PC-9 (cell line): ENCODE measurements at regions of chr12 and their contacts with region 1.

Region 1: DNA sequence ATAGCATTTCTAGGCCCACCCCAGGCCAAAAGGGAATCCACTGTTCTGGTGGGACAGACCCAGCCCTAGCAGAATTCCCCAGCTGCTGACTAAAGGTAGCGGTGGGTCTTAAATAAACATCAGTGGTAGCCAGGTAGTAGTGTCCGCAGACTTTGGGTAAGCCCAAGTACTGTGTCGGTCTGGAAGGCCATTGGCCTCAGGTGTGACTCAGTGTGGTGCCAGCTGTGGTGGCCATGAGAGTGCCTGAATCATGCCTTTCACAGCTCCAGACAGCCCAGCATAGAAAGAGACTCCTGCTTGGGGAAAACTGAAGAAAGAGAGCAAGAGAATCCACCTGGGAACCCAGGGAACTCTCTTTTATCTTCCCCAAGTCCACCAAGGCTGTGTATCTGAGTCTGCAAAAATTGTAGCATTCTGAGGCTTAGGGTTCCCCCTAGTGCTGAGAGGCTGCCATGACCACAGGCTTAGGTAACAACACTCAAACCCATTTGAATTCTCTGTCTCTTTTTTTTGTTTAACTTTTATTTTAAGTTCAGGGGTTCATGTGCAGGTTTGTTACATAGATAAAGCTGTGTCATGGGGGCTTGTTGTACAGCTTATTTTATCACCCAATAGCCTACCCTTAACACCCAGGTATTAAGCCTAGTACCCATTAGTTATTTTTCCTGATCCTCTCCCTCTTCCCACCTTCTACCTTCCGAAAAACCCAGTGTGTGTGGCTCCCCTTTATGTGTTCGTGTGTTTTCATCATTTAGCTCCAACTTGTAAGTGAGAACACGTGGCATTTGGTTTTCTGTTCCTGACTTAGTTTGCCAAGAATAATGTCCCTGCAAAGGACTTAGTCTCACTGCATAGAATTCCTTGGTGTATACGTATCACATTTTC is 16.7 kb upstream of the CD163L1 start:
- DNase-seq: peak; percentile 56 to 74
- H3K4me3 ChIP-seq: no peak overlapping the region
- H3K27ac ChIP-seq: no peak overlapping the region
- H3K4me1 ChIP-seq: no peaks in the 10 kb centered on the region
- H3K27me3 ChIP-seq: no peaks in the 10 kb centered on the region
- CTCF ChIP-seq: peak; percentile 95

Region 2: DNA sequence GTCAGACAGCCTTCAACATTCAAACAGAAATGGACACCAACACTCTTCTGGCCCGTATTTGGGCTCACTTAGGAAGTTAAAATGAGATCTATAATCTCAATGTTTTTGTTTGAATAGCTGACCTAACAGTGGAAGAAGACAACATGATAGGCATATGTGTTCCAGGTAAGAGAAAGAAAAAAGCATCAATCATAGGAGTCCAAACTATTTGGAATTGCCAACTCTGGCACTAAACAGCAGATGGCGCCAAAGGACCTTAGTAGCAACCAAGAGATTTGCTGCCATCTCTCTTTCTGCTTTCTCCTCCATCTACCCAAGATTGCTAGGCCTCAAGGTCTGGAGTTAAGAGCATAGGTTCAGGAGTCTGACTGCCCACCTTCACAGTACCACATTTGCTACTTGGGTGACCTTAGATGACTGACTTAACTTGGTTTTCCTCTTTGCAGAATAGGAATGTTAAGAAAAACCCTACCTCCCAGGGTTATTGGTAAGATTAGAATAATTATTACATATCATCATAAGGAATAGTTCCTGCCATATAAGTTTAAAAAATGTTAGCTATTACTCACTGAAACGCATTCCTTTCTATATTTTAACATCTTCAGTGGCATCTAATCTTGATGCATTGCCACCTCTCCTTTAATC is 240.9 kb before region 1 on chr12:
- CTCF ChIA-PET with region 1: no interaction called
- POLR2A ChIA-PET with region 1: no interaction called
- intact Hi-C with region 1: loop called (anchors 1 kb)
- DNase-seq: peak; percentile 60 to 69
- H3K4me3 ChIP-seq: no peak overlapping the region
- H3K27ac ChIP-seq: no peak overlapping the region
- H3K4me1 ChIP-seq: no peaks in the 10 kb centered on the region
- H3K27me3 ChIP-seq: no peaks in the 10 kb centered on the region
- CTCF ChIP-seq: peak; percentile 96

Region 3: DNA sequence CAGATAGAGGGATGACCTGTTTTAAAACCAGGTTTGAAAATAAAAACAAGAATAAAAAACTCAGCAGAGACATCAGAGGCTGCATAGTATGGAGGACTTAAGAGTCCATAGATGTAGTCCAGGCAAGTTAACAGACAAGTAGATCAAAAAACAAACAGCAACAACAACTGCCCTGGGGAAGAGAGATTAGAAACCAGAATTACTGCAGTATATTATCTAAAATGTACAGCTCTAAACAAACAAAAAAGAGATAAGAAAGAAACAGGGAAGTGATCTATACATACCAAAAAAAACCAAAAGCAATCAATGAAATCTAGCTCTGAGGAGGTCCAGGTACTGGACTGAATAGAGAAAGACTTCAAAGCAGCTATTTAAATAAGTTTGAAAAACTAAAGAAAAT is 108.0 kb before region 1 on chr12:
- CTCF ChIA-PET with region 1: interaction called, 13 read pairs
- POLR2A ChIA-PET with region 1: no interaction called
- intact Hi-C with region 1: no loop called
- DNase-seq: no peak
- H3K4me3 ChIP-seq: no peak overlapping the region
- H3K27ac ChIP-seq: no peak overlapping the region
- H3K4me1 ChIP-seq: no peaks in the 10 kb centered on the region
- H3K27me3 ChIP-seq: no peaks in the 10 kb centered on the region
- CTCF ChIP-seq: no peak

Region 4: DNA sequence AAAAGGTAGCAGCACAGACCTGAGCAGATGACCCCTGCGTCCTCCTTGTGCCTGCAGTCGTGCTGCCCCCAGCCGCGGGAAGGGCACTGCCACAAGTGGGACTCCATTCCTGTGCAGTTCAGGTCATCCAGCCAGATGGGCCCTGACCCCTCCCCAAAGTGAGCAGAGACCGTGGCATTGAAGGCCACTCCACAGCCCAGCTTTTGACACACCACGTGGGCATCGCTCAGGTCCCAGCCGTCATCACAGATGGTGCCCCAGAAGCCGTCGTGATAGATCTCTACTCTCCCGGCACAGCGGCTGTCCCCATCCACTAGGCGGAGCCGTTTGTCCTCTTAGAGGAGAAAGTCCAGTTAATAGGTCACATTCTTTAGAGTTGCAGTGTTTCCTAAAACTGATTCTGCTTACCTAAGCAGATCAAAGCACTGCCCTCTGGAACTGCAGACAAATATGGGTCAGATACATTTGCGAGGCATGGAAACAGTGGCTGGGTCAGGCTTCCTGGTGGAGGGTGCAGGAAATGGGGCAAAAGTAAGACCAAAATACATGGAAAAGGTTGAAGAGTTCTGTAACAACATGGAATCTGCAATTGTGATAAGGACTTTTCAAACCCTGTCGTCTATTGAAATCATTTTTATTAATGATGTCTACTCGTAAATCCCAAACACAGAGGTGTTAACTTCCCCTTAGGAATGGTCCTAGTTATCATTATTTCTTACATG is 86.0 kb before region 1 on chr12:
- CTCF ChIA-PET with region 1: no interaction called
- POLR2A ChIA-PET with region 1: no interaction called
- intact Hi-C with region 1: loop called (anchors 1 kb)
- DNase-seq: peak in 1 of 2 experiments; percentile 60
- H3K4me3 ChIP-seq: no peak overlapping the region
- H3K27ac ChIP-seq: no peak overlapping the region
- H3K4me1 ChIP-seq: no peaks in the 10 kb centered on the region
- H3K27me3 ChIP-seq: no peaks in the 10 kb centered on the region; the same call in 1 of the 2 replicates
- CTCF ChIP-seq: peak; percentile 56

Region 5: GRCh38 chr12:7498832-7499231 is 38.2 kb after region 1 on chr12:
- CTCF ChIA-PET with region 1: interaction called, 14 read pairs
- POLR2A ChIA-PET with region 1: no interaction called
- intact Hi-C with region 1: no loop called
- DNase-seq: no peak
- H3K4me3 ChIP-seq: no peak overlapping the region
- H3K27ac ChIP-seq: no peak overlapping the region
- H3K4me1 ChIP-seq: no peaks in the 10 kb centered on the region
- H3K27me3 ChIP-seq: no peaks in the 10 kb centered on the region
- CTCF ChIP-seq: no peak